ENCODE measurements at regions of chr10 and their contacts with region 1.

Region 1: DNA sequence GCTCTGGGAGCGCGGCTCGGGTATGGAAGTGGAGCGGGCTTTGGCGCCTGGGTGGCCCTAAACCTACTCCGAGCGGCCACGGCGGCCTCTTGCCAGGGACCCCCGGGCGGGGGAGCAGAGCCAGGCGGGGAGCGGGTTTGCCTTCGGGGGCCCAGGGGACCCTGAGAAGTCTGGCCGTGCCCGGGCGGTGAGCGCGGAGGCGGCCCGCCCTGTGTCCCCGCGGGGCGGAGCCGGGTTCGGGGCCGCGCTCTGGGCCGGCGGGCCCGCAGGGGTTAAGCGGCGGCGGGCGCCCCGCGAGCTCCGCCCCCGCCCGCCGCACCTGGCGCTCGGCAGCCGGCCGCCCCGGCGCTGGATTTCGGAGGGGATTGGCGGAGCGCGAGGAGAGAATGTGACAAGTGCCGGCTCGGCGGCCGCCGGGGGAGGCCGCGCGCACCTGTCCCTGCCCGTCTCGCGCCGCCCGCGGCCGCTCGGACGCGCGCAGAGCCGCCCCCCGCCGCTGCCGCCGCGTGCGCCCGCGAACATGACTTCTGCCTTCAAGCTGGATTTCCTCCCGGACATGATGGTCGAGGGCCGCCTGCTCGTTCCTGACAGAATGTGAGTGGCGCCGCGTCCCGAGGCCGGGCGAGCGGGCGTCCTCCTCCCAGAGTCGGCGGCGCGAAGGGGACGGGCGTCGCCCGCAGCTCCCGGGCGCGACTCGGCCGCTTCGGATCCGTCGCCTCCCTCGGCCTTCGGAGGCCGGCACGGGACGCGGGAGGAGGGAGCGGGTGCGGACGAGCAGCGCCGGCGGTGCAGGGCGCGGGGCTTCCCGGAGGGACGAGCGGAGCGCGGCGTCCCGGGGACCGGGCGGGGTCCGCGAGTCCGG is at the start of gene CELF2:
- DNase-seq: peak; percentile 35 to 62 (median 42)
- ATAC-seq: peak; percentile 80
- H3K4me3 ChIP-seq: peak within 1 kb of the TSS; percentile 40
- H3K4me3 Mint-ChIP-seq: peak within 1 kb of the TSS; percentile 69 to 91 (median 80)
- H3K27ac ChIP-seq: no peak within 1 kb of the TSS
- H3K27ac Mint-ChIP-seq: peak within 1 kb of the TSS in 2 of 9 donors; percentile 32 to 70
- H3K4me1 ChIP-seq: peaks cover 4% of the 10 kb centered on the region in 2 donors
- H3K4me1 Mint-ChIP-seq: peaks cover 0 to 17% (median 11%) of the 10 kb centered on the region in 7 donors
- H3K27me3 ChIP-seq: peaks cover 5 to 21% of the 10 kb centered on the region in 2 donors
- H3K27me3 Mint-ChIP-seq: peaks cover 69 to 88% (median 74%) of the 10 kb centered on the region in 5 donors
- total RNA-seq, gene CELF2: 135 to 207 (median 178) TPM

Region 2: DNA sequence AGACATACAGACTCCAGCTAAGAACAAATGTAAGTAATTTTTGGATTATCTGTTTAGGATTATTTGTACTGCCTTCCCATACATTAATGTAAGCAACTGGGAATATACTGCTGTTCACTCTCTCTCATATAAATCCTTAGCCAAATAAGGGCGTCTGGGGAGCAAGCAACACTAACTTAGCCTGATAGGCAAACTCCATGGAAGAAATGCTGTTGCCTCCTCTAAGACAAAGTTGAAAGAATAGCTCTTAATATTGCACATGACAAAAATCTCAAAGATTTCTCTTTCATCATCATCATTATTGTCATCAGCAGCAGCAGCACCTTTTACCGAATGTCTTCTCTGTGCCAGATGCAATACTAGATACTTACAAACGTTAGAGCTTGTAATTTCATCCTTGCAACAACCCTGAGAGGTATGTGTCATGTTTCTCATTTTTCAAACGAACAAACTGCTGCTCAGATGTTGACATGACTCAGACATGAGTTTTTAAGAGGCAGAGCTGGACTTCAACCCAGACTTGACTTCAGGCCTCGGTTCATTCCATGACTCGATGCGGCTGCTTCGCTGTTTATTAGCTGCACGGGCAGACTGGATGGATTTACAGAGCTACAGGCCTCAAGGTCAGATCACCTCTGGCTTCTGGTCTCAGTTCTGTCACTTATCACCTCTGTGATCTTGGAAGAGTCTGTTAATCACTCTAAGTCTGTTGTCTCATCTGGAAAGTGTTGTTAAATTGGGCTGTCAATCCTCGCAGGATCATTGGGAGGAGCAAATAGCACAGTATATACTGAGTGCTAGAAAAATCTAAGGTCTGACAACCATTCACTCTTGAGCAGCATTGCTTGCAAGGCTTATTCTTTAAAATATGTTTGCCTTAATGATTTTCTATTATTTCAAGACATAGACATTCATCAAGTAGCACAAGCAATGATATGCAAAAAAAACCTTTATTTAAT is 126.4 kb before region 1 on chr10:
- CTCF ChIA-PET with region 1: no interaction called
- POLR2A ChIA-PET with region 1: no interaction called
- intact Hi-C with region 1: no loop called
- DNase-seq: no peak
- ATAC-seq: no peak
- H3K4me3 ChIP-seq: no peak overlapping the region
- H3K4me3 Mint-ChIP-seq: no peak overlapping the region
- H3K27ac ChIP-seq: no peak overlapping the region
- H3K27ac Mint-ChIP-seq: no peak overlapping the region
- H3K4me1 ChIP-seq: no peaks in the 10 kb centered on the region
- H3K4me1 Mint-ChIP-seq: no peaks in the 10 kb centered on the region
- H3K27me3 ChIP-seq: no peaks in the 10 kb centered on the region
- H3K27me3 Mint-ChIP-seq: peaks cover 0 to 20% (median 5%) of the 10 kb centered on the region in 5 donors

Region 3: GRCh38 chr10:11236234-11236633 is 218.4 kb after region 1 on chr10:
- CTCF ChIA-PET with region 1: no interaction called
- POLR2A ChIA-PET with region 1: no interaction called
- intact Hi-C with region 1: loop called in 1 of 2 experiments (anchors 5 kb)
- DNase-seq: peak in 6 of 9 donors; percentile 29 to 56 (median 48)
- ATAC-seq: peak; percentile 83
- H3K4me3 ChIP-seq: no peak overlapping the region
- H3K4me3 Mint-ChIP-seq: peak overlapping the region in 9 of 10 donors; percentile 44 to 68 (median 63)
- H3K27ac ChIP-seq: peak overlapping the region; percentile 44
- H3K27ac Mint-ChIP-seq: peak overlapping the region; percentile 26 to 92 (median 77)
- H3K4me1 ChIP-seq: peaks cover 61 to 82% of the 10 kb centered on the region in 2 donors
- H3K4me1 Mint-ChIP-seq: peaks cover 69 to 94% (median 92%) of the 10 kb centered on the region in 7 donors
- H3K27me3 ChIP-seq: no peaks in the 10 kb centered on the region
- H3K27me3 Mint-ChIP-seq: no peaks in the 10 kb centered on the region